Heart left ventricle (tissue), 16 donors: ENCODE measurements at regions of chr17 and their contacts with region 1.

Region 1: DNA sequence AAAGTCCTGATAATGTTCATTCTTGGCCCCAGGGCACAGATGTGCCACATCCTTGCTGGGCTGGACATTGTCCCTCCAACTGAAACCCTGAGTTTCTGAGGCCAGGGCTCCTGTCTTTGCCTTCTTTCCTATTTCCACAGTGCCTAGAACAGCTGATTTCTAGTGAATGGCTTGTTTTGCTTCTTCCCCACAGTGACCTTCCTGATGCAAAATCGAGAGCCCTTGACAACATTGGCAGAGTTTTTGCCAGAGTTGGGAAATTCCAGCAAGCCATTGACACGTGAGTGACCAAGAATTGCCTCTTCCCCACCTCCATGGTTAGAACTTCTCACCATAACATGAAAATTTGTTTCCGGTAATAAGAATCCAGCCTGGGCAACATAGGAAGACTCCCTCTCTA is 14.5 kb downstream of the ODAD4 start:
- DNase-seq: no peak
- ATAC-seq: no peak
- H3K4me3 ChIP-seq: no peak overlapping the region
- H3K27ac ChIP-seq: no peak overlapping the region
- H3K4me1 ChIP-seq: no peaks in the 10 kb centered on the region
- H3K27me3 ChIP-seq: no peaks in the 10 kb centered on the region
- CTCF ChIP-seq: no peak
- POLR2A ChIP-seq: no peak

Region 2: DNA sequence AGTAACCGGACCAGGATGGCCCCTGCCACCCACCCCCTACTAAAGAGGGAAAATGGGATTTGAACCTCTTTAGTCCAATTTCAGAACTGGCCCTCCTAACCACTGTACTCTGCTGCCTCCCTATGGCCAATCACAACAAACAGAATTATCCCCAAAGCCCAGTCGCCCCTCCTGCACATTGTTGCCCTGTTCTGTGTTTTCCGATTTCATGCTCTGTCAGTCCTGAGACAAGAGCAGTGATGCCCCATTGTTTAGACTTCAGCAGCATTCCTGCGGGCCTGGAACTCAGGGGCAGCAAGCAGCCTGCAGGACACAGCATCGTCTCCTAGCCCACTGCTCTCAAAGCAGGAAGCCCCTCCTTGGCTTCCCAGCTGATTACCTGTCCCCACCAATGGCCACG is 59.2 kb before region 1 on chr17:
- intact Hi-C with region 1: no loop called
- DNase-seq: no peak
- ATAC-seq: no peak
- H3K4me3 ChIP-seq: no peak overlapping the region
- H3K27ac ChIP-seq: no peak overlapping the region
- H3K4me1 ChIP-seq: no peaks in the 10 kb centered on the region
- H3K27me3 ChIP-seq: no peaks in the 10 kb centered on the region
- CTCF ChIP-seq: peak in 5 of 12 donors; percentile 3 to 31 (median 14)
- POLR2A ChIP-seq: no peak

Region 3: GRCh38 chr17:41959336-41960095 is 14.6 kb after region 1 on chr17:
- intact Hi-C with region 1: loop called in 1 of 10 experiments (anchors 1 kb)
- DNase-seq: peak in 1 of 5 donors; percentile 26
- ATAC-seq: peak; percentile 28 to 59 (median 40)
- H3K4me3 ChIP-seq: no peak overlapping the region
- H3K27ac ChIP-seq: no peak overlapping the region
- H3K4me1 ChIP-seq: peaks cover 0 to 8% (median 5%) of the 10 kb centered on the region in 12 donors
- H3K27me3 ChIP-seq: no peaks in the 10 kb centered on the region
- CTCF ChIP-seq: peak in 8 of 12 donors; percentile 11 to 41 (median 34)
- POLR2A ChIP-seq: no peak